KBM-7 (cell line): ENCODE measurements at regions of chr4 and their contacts with region 1.

Region 1: GRCh38 chr4:18593445-18594002 is 572.0 kb upstream of the LCORL start:
- DNase-seq: peak; percentile 73

Region 2: DNA sequence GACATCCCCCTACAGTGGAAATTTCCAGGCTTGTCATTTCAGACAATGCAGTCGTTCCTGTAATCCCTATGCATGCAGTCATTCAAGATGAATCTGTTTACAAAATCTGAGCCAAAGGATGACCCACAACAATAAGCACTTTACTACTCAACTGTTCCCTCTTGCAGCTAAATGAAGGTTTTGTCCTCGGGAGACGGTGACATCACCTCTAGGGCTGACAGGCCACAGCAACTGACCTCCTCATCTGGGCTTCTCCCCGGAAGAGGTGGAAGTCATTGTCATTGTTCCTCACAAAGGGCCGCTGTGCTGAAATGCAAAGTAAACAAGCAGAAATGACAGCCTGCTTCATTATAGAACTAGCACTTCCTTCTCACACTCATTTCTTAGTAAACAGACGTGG is 1049.3 kb before region 1 on chr4:
- in situ Hi-C with region 1: loop called (anchors 25 kb)
- DNase-seq: no peak